Cardiac septum (tissue), 1 donor: ENCODE measurements at regions of chr17 and their contacts with region 1.

Region 1: GRCh38 chr17:1573916-1574696 is 11.5 kb upstream of the PITPNA start:
- DNase-seq: peak; percentile 93

Region 2: GRCh38 chr17:1628856-1629646 is 54.9 kb after region 1 on chr17:
- intact Hi-C with region 1: loop called (anchors 1 kb)
- DNase-seq: peak; percentile 97

Region 3: GRCh38 chr17:1658100-1658499 is 84.0 kb after region 1 on chr17:
- intact Hi-C with region 1: no loop called
- DNase-seq: no peak

Region 4: DNA sequence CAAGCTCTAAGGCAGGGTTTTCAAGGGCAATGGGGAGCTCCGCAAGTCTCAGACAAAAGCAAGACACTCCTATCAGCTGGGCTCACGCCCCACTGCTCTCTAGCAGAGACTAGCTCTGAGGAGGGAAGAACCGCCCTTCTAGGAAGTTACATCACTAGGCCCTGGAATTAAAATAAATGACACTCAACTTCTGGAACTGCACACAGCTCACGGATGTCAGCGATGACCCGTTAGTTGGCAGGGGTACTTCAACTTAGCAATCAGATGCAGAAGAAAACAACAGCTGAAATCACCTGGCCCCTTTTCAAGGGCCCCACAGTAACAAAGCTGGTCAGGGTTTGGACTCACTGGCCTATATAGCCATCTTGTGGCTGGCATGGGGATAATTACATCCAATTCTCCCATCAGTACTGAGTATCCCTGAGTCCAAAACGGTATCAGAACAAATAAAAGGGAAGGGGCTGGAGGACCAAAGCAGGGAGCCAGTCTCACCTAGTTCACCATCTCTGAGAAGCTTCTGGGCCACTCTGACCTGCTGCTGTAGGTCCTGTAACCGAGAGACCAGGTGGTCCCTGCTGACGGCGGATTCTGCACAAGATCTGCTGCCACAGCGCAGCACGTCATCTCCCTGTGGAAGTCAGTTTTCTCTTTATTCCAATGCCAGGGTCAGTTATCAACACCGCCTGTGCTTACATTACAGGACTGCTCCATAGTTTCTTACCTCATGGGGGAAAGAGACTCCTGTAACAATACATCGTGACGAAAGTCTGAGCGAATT is 209.9 kb after region 1 on chr17:
- intact Hi-C with region 1: loop called (anchors 5 kb)
- DNase-seq: peak; percentile 83

Region 5: GRCh38 chr17:1878419-1879121 is 304.5 kb after region 1 on chr17:
- intact Hi-C with region 1: loop called (anchors 10 kb)
- DNase-seq: no peak